A673 (cell line): ENCODE measurements at regions of chr5 and their contacts with region 1.

Region 1: DNA sequence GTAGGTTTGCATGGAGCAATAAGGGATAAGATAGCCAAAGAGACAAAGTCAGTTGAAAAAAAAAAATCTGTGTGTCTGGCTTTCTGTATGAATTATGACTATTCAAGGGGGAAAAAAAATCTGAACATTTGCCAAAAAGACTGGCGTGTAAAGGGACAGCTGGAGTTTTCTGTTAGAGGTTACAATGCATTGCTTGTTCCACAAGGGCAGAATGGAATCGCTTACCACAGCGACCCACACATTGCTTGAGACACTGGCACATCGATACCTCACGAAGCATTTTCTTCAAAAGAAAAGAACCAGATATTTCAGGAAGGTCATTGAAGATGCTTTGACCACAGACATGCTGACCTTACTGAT is 327.8 kb downstream of the TMEM167A start:
- DNase-seq: peak; percentile 94
- H3K4me3 ChIP-seq: peak overlapping the region; percentile 18
- H3K27ac ChIP-seq: peak overlapping the region; percentile 64
- H3K4me1 ChIP-seq: peaks cover 41% of the 10 kb centered on the region
- H3K27me3 ChIP-seq: peaks cover 20% of the 10 kb centered on the region
- CTCF ChIP-seq: no peak

Region 2: GRCh38 chr5:82952326-82952725 is 202.9 kb after region 1 on chr5:
- CTCF ChIA-PET with region 1: no interaction called
- POLR2A ChIA-PET with region 1: no interaction called
- intact Hi-C with region 1: no loop called
- DNase-seq: no peak
- H3K4me3 ChIP-seq: no peak overlapping the region
- H3K27ac ChIP-seq: no peak overlapping the region
- H3K4me1 ChIP-seq: no peaks in the 10 kb centered on the region
- H3K27me3 ChIP-seq: no peaks in the 10 kb centered on the region
- CTCF ChIP-seq: no peak

Region 3: GRCh38 chr5:82991678-82992323 is 242.4 kb after region 1 on chr5:
- CTCF ChIA-PET with region 1: no interaction called
- POLR2A ChIA-PET with region 1: no interaction called
- intact Hi-C with region 1: loop called (anchors 5 kb)
- DNase-seq: peak; percentile 84
- H3K4me3 ChIP-seq: no peak overlapping the region
- H3K27ac ChIP-seq: peak overlapping the region; percentile 18
- H3K4me1 ChIP-seq: peaks cover 16% of the 10 kb centered on the region
- H3K27me3 ChIP-seq: no peaks in the 10 kb centered on the region
- CTCF ChIP-seq: no peak